ENCODE measurements at regions of chr11 and their contacts with region 1.

Region 1: GRCh38 chr11:27485930-27486773 is 13.6 kb upstream of the LGR4 start:
- DNase-seq: peak; percentile 43
- CTCF ChIP-seq: peak; percentile 79

Region 2: GRCh38 chr11:27183672-27184457 is 302.3 kb before region 1 on chr11:
- CTCF ChIA-PET with region 1: interaction called, 170 read pairs
- POLR2A ChIA-PET with region 1: no interaction called
- DNase-seq: peak; percentile 22
- CTCF ChIP-seq: peak; percentile 51

Region 3: GRCh38 chr11:27201454-27202236 is 284.5 kb before region 1 on chr11:
- CTCF ChIA-PET with region 1: interaction called, 18 read pairs
- POLR2A ChIA-PET with region 1: no interaction called
- DNase-seq: no peak
- CTCF ChIP-seq: no peak

Region 4: GRCh38 chr11:27209562-27210005 is 276.6 kb before region 1 on chr11:
- CTCF ChIA-PET with region 1: interaction called, 16 read pairs
- POLR2A ChIA-PET with region 1: no interaction called
- DNase-seq: no peak
- CTCF ChIP-seq: no peak

Region 5: GRCh38 chr11:27472398-27473016 is 13.6 kb before region 1 on chr11 and contains the start of gene LGR4:
- CTCF ChIA-PET with region 1: interaction called, 42 read pairs
- POLR2A ChIA-PET with region 1: interaction called, 3 read pairs
- DNase-seq: peak; percentile 66
- CTCF ChIP-seq: no peak

Region 6: GRCh38 chr11:27497284-27497866 is 11.2 kb after region 1 on chr11:
- CTCF ChIA-PET with region 1: interaction called, 101 read pairs
- POLR2A ChIA-PET with region 1: no interaction called
- DNase-seq: no peak
- CTCF ChIP-seq: peak; percentile 44

Measured in GM10248 (cell line).